Naive thymus-derived CD4-positive, alpha-beta T cell (primary cell): ENCODE measurements at regions of chr3 and their contacts with region 1.

Region 1: GRCh38 chr3:115692887-115693524 is 69.7 kb downstream of the GAP43 start:
- DNase-seq: peak; percentile 19 to 65 (median 49)
- ATAC-seq: peak; percentile 89
- H3K4me3 ChIP-seq: no peak overlapping the region
- H3K4me3 Mint-ChIP-seq: no peak overlapping the region
- H3K27ac ChIP-seq: no peak overlapping the region
- H3K27ac Mint-ChIP-seq: peak overlapping the region in 1 of 9 donors; percentile 47
- H3K4me1 ChIP-seq: no peaks in the 10 kb centered on the region
- H3K4me1 Mint-ChIP-seq: no peaks in the 10 kb centered on the region
- H3K27me3 ChIP-seq: no peaks in the 10 kb centered on the region
- H3K27me3 Mint-ChIP-seq: peaks cover 3 to 11% (median 4%) of the 10 kb centered on the region in 5 donors

Region 2: GRCh38 chr3:113838631-113839209 is 1854.3 kb before region 1 on chr3 and contains the start of gene GRAMD1C:
- CTCF ChIA-PET with region 1: no interaction called
- POLR2A ChIA-PET with region 1: no interaction called
- intact Hi-C with region 1: loop called in 1 of 2 experiments (anchors 10 kb)
- DNase-seq: peak; percentile 70 to 86 (median 83)
- ATAC-seq: peak; percentile 100
- H3K4me3 ChIP-seq: peak within 1 kb of the TSS; percentile 72
- H3K4me3 Mint-ChIP-seq: peak within 1 kb of the TSS; percentile 72 to 85 (median 80)
- H3K27ac ChIP-seq: no peak within 1 kb of the TSS
- H3K27ac Mint-ChIP-seq: peak within 1 kb of the TSS in 5 of 9 donors; percentile 2 to 41 (median 17)
- H3K4me1 ChIP-seq: no peaks in the 10 kb centered on the region
- H3K4me1 Mint-ChIP-seq: peaks cover 0 to 11% (median 5%) of the 10 kb centered on the region in 7 donors
- H3K27me3 ChIP-seq: no peaks in the 10 kb centered on the region
- H3K27me3 Mint-ChIP-seq: peaks cover 0 to 7% (median 4%) of the 10 kb centered on the region in 5 donors
- total RNA-seq, gene GRAMD1C: 0.22 to 0.54 (median 0.28) TPM in 4 of 5 experiments, not detected in the other

Region 3: GRCh38 chr3:114827495-114827894 is 865.5 kb before region 1 on chr3:
- CTCF ChIA-PET with region 1: no interaction called
- POLR2A ChIA-PET with region 1: no interaction called
- intact Hi-C with region 1: loop called (anchors 1 kb)
- DNase-seq: peak in 2 of 9 donors; percentile 11 to 18
- ATAC-seq: peak; percentile 50
- H3K4me3 ChIP-seq: no peak overlapping the region
- H3K4me3 Mint-ChIP-seq: no peak overlapping the region
- H3K27ac ChIP-seq: no peak overlapping the region
- H3K27ac Mint-ChIP-seq: no peak overlapping the region
- H3K4me1 ChIP-seq: no peaks in the 10 kb centered on the region
- H3K4me1 Mint-ChIP-seq: peaks cover 0 to 11% (median 4%) of the 10 kb centered on the region in 7 donors
- H3K27me3 ChIP-seq: no peaks in the 10 kb centered on the region
- H3K27me3 Mint-ChIP-seq: no peaks in the 10 kb centered on the region

Region 4: GRCh38 chr3:115147329-115148141 is 545.5 kb before region 1 on chr3:
- CTCF ChIA-PET with region 1: no interaction called
- POLR2A ChIA-PET with region 1: no interaction called
- intact Hi-C with region 1: loop called in 1 of 2 experiments (anchors 2 kb)
- DNase-seq: peak; percentile 84 to 99 (median 98)
- ATAC-seq: peak; percentile 83
- H3K4me3 ChIP-seq: peak overlapping the region; percentile 65
- H3K4me3 Mint-ChIP-seq: peak overlapping the region; percentile 93 to 100 (median 96)
- H3K27ac ChIP-seq: peak overlapping the region; percentile 98
- H3K27ac Mint-ChIP-seq: peak overlapping the region; percentile 97 to 100 (median 100)
- H3K4me1 ChIP-seq: peaks cover 15 to 18% of the 10 kb centered on the region in 2 donors
- H3K4me1 Mint-ChIP-seq: peaks cover 16 to 45% (median 24%) of the 10 kb centered on the region in 7 donors
- H3K27me3 ChIP-seq: no peaks in the 10 kb centered on the region
- H3K27me3 Mint-ChIP-seq: peaks cover 0 to 8% (median 0%) of the 10 kb centered on the region in 5 donors

Region 5: DNA sequence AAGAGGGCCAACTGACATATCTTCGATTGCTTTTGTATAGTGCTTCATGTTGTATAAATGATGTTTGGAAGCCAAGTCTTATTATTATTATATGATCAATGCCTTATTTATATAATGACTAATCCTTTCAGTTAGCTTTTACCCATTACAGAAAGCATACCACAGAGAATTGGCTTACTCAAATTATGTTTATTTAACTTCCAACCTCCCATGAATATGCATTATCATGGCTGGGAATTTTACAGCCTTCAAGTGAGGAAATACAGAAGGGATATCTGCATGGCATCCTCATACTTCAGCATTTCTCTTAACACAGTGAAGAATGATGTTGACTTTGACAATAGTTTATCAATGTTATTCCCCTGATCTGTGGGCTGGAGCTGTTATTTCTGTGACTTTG is 295.6 kb before region 1 on chr3:
- CTCF ChIA-PET with region 1: no interaction called
- POLR2A ChIA-PET with region 1: no interaction called
- intact Hi-C with region 1: loop called in 1 of 2 experiments (anchors 10 kb)
- DNase-seq: no peak
- ATAC-seq: no peak
- H3K4me3 ChIP-seq: no peak overlapping the region
- H3K4me3 Mint-ChIP-seq: no peak overlapping the region
- H3K27ac ChIP-seq: no peak overlapping the region
- H3K27ac Mint-ChIP-seq: no peak overlapping the region
- H3K4me1 ChIP-seq: no peaks in the 10 kb centered on the region
- H3K4me1 Mint-ChIP-seq: no peaks in the 10 kb centered on the region
- H3K27me3 ChIP-seq: no peaks in the 10 kb centered on the region
- H3K27me3 Mint-ChIP-seq: no peaks in the 10 kb centered on the region

Region 6: GRCh38 chr3:115783938-115784738 is 91.1 kb after region 1 on chr3:
- CTCF ChIA-PET with region 1: interaction called, 4 read pairs
- POLR2A ChIA-PET with region 1: no interaction called
- intact Hi-C with region 1: loop called in 1 of 2 experiments (anchors 1 kb)
- DNase-seq: peak; percentile 88 to 94 (median 92)
- ATAC-seq: peak; percentile 92
- H3K4me3 ChIP-seq: peak overlapping the region; percentile 54
- H3K4me3 Mint-ChIP-seq: peak overlapping the region; percentile 80 to 97 (median 91)
- H3K27ac ChIP-seq: peak overlapping the region; percentile 99
- H3K27ac Mint-ChIP-seq: peak overlapping the region; percentile 79 to 99 (median 98)
- H3K4me1 ChIP-seq: peaks cover 3% of the 10 kb centered on the region in 2 donors
- H3K4me1 Mint-ChIP-seq: peaks cover 8 to 16% (median 14%) of the 10 kb centered on the region in 7 donors
- H3K27me3 ChIP-seq: no peaks in the 10 kb centered on the region
- H3K27me3 Mint-ChIP-seq: peaks cover 0 to 25% (median under 1%) of the 10 kb centered on the region in 5 donors

Region 7: DNA sequence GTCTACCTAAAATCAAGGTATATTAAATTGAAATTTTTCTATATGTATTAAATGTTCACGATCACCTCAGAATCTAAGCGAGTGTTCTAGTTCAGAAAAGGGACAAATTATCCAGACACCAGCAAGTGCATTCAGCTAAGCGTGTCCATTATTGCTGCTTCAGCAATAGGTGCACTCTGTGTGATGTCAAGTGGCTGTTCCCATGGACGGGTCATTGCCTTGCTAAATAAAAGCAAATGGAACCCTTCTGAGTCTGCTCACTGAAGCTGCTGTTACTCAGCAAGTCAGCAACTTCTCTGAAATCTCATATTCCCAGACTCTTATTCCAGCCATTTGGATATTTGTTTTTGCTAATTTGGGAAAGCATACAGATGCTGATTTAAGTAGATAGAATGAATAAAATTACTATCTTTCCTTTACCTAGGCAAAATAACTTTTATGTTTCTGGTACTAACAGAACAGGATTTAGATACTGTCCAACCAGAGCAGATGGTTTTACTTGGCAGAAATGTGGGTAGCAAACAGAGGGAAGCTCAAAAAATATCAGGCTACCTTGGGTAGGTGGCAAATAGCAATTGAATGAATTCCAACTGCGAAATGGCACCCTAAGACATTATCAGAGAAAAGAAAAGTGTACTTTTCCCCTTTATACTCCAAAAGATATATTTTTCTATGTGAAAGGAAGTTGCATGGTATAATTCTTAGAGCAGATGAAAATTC is 337.3 kb after region 1 on chr3:
- CTCF ChIA-PET with region 1: no interaction called
- POLR2A ChIA-PET with region 1: no interaction called
- intact Hi-C with region 1: no loop called
- DNase-seq: no peak
- ATAC-seq: no peak
- H3K4me3 ChIP-seq: no peak overlapping the region
- H3K4me3 Mint-ChIP-seq: no peak overlapping the region
- H3K27ac ChIP-seq: no peak overlapping the region
- H3K27ac Mint-ChIP-seq: no peak overlapping the region
- H3K4me1 ChIP-seq: no peaks in the 10 kb centered on the region
- H3K4me1 Mint-ChIP-seq: no peaks in the 10 kb centered on the region
- H3K27me3 ChIP-seq: no peaks in the 10 kb centered on the region
- H3K27me3 Mint-ChIP-seq: no peaks in the 10 kb centered on the region